Activated CD4-positive, alpha-beta T cell treated with anti-CD3 and anti-CD28 coated beads, Interleukin-2, amount 10 ng/mL, durations not matched to agents 24 days and 14 days (primary cell): ENCODE measurements at regions of chr11 and their contacts with region 1.

Region 1: DNA sequence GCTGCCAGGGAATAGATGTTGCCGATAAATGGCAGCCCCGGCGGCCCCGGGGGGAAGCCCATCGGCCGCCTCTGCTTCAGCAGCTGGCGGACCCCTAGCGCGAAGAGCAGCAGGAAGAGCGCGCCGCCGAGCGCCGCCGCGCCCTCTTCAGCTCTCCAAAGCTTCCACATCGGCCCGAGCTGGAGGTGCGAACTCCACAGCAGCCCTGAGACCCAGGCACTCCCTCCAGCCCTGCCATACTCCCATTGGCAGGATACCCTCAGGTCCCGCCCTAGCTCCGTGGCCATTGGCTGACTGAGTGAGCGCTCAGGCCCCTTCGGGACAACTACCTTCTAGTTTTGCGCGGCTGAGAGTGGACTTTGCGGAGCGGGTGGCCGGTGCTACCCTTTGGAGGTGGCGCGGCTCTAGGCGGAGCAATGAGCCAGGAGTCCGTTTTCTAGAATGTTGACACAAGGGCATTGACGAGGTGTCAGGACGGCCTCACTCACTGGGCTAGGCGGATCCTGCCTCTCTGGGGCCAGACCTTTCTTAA is at the start of gene CYP2R1:
- DNase-seq: peak; percentile 98
- H3K4me3 Mint-ChIP-seq: peak within 1 kb of the TSS; percentile 93
- H3K27ac Mint-ChIP-seq: peak within 1 kb of the TSS; percentile 99
- H3K4me1 Mint-ChIP-seq: peaks cover 53% of the 10 kb centered on the region
- H3K27me3 Mint-ChIP-seq: no peaks in the 10 kb centered on the region
- total RNA-seq, gene CYP2R1: 13.1 and 13.7 TPM in 2 replicates

Region 2: DNA sequence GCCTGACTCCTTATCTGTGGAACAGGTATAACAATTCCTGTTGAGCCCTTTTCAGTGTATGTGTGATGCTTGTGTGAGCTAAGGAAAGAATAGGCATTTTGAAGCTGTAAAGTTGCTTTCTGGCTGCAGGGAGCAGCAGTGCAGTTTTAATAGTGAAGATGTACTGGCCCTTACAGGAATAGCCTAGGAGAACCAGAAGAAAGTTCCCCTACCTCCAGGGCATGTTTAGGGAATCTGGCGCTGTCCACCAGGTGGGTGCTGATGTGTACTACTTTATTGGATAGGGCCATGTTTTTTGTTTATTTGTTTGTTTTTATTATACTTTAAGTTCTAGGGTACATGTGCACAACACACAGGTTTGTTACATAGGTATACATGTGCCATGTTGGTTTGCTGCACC is 1603.0 kb before region 1 on chr11:
- intact Hi-C with region 1: loop called (anchors 5 kb)
- DNase-seq: no peak
- H3K4me3 Mint-ChIP-seq: no peak overlapping the region
- H3K27ac Mint-ChIP-seq: peak overlapping the region; percentile 91
- H3K4me1 Mint-ChIP-seq: peaks cover 58% of the 10 kb centered on the region
- H3K27me3 Mint-ChIP-seq: no peaks in the 10 kb centered on the region

Region 3: DNA sequence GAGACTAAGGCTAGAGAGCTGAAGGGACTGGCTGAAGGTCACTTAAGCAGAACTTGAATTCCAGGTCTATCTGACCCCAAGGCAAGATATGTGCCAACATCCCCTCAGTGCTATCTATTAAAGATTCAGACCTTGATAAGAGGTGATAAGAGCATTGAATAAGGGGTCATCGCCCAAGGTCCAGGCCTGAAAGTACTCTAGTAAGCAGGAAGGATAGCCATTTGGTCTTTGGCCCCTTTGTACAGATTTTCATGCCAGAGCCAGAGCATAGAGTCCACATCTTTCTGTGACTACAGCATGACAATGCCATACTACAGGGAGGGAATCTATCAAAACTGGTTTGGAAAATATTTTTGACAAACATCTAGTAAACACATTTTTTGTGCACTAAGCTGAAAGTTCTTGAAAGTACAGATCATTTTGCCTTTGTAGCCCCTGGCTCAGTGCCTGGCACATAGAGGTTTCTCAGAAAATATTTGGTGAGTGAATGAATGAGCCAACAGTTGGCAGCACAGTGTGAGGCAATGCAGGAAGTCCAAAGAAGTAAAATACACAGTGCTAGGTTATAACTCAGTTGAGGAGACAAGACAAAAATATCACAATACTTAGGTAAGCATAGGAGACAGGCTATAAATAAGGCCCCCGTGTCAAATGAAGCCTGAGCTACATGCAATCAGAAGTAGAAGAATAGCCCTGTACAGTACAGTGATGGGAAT is 518.0 kb before region 1 on chr11:
- intact Hi-C with region 1: loop called (anchors 10 kb)
- DNase-seq: no peak
- H3K4me3 Mint-ChIP-seq: no peak overlapping the region
- H3K27ac Mint-ChIP-seq: peak overlapping the region; percentile 68
- H3K4me1 Mint-ChIP-seq: peaks cover 48% of the 10 kb centered on the region
- H3K27me3 Mint-ChIP-seq: peaks cover 5% of the 10 kb centered on the region

Region 4: DNA sequence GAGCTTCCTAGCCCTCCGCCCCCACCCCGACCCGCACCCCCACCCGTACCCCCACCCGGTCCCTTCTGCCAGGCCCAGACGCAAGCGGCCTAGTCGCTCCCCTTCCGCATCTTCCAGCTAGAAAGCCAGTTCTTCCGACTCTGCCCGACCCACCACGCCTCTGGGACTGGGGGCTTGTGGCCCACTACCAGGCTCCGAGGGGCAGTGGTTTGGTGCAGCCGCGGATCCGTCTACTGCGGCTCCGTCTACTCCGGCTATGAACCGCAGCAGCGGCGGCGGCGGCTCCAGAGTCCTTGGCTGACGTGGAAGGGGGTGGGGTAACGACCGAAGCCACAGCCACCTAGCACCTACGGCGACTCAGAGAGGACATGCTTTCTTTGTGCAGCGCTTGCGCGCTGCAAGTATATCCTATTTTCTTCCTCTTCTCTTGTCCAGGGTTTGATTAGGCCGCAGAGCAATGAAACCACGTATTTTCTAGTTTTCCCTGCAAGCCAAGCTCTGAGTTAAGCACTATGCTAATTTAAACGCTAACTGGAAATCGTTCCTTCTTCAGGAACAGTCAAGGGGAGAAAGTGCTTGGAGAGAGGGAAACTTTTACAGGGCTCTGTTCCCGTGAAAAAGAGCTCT is 392.4 kb before region 1 on chr11 and contains the start of gene COPB1:
- intact Hi-C with region 1: loop called (anchors 1 kb)
- DNase-seq: peak; percentile 98
- H3K4me3 Mint-ChIP-seq: peak within 1 kb of the TSS; percentile 99
- H3K27ac Mint-ChIP-seq: peak within 1 kb of the TSS; percentile 96
- H3K4me1 Mint-ChIP-seq: peaks cover 34% of the 10 kb centered on the region
- H3K27me3 Mint-ChIP-seq: no peaks in the 10 kb centered on the region
- total RNA-seq, gene COPB1: 91.8 and 93.5 TPM in 2 replicates

Region 5: GRCh38 chr11:14519917-14520746 is 372.0 kb before region 1 on chr11 and contains the start of gene PSMA1:
- intact Hi-C with region 1: loop called (anchors 1 kb)
- DNase-seq: peak; percentile 98
- H3K4me3 Mint-ChIP-seq: peak within 1 kb of the TSS; percentile 96
- H3K27ac Mint-ChIP-seq: peak within 1 kb of the TSS; percentile 98
- H3K4me1 Mint-ChIP-seq: peaks cover 22% of the 10 kb centered on the region
- H3K27me3 Mint-ChIP-seq: no peaks in the 10 kb centered on the region
- total RNA-seq, gene PSMA1: 334 and 344 TPM in 2 replicates

Region 6: DNA sequence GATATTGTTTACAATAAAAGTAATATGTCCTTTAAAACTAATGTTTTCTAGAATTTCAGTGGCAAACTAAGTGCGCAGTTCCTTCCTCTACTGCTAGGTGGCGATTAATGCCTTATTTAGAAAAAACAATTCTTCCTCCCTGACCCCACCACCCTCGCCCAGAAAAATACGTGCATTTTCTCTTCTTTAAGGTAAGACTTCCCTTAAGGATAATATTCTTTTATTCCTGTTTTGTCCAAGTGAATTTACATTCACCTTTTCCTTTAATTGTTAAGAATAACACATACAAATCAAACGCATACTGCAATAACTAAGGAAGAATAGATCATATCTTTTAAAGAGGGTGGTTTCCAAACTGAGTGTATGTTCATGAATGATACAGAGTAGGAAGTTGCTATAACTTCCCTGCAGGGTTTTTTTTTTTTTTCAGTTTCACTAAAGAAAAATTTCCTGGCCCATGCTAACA is 354.9 kb before region 1 on chr11:
- intact Hi-C with region 1: loop called (anchors 5 kb)
- DNase-seq: peak; percentile 82
- H3K4me3 Mint-ChIP-seq: peak overlapping the region; percentile 70
- H3K27ac Mint-ChIP-seq: peak overlapping the region; percentile 87
- H3K4me1 Mint-ChIP-seq: peaks cover 32% of the 10 kb centered on the region
- H3K27me3 Mint-ChIP-seq: no peaks in the 10 kb centered on the region

Region 7: GRCh38 chr11:14578541-14578956 is 313.6 kb before region 1 on chr11:
- intact Hi-C with region 1: loop called (anchors 1 kb)
- DNase-seq: peak; percentile 92
- H3K4me3 Mint-ChIP-seq: peak overlapping the region; percentile 74
- H3K27ac Mint-ChIP-seq: peak overlapping the region; percentile 90
- H3K4me1 Mint-ChIP-seq: peaks cover 51% of the 10 kb centered on the region
- H3K27me3 Mint-ChIP-seq: no peaks in the 10 kb centered on the region